ENCODE measurements at regions of chr11 and their contacts with region 1.

Region 1: GRCh38 chr11:76799066-76799804 is 16.1 kb downstream of the TSKU start:
- DNase-seq: peak; percentile 95
- ATAC-seq: peak; percentile 91

Region 2: GRCh38 chr11:76734456-76735420 is 64.5 kb before region 1 on chr11:
- intact Hi-C with region 1: loop called (anchors 2 kb)
- DNase-seq: no peak
- ATAC-seq: no peak

Region 3: DNA sequence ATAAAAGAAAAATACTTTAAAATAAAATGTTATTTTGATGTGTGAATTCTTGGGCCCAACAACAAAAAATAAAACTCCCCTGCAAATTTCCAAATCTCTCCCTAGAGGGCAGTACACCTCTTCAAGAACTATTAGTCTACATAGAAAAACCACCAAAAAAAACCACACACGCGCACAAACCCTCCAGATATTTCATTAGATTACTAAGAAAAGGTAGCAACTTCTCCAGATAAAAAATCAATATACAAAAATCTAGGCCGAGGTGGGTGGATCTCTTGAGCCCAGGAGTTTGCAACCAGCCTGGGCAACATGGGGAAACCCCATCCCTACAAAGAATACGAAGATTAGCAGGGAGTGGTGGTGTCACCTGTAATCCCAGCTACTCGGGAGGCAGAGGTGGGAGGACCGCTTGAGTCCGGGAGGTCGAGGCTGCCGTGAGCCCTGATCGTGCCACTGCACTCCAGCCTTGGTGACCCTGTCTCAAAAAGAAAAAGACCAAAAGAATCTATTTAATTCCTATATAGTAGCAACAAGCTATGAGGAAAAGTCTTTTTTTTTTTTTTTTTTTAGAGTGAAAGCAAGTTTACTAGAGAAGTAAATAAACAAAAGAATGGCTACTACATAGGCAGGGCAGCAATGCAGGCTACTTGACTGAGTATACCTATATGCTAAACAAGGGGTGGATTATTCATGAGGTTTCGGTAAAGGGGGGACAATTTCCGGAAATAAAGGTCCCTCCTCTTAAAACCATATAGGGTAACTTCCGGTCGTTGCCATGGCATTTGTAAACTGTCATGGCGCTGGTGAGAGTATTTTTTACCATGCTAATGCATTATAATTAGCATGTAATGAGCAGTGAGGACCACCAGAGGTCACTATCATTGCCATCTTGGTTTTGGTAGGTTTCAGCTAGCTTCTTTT is 248.0 kb after region 1 on chr11:
- intact Hi-C with region 1: no loop called
- DNase-seq: no peak
- ATAC-seq: peak; percentile 93

Measured in left ventricle myocardium superior (tissue), 1 donor.